Calu3 (cell line): ENCODE measurements at regions of chr5 and their contacts with region 1.

Region 1: GRCh38 chr5:128083033-128083810 is at the start of gene SLC12A2:
- DNase-seq: peak; percentile 92
- H3K4me3 Mint-ChIP-seq: peak within 1 kb of the TSS; percentile 91
- H3K27ac Mint-ChIP-seq: peak within 1 kb of the TSS; percentile 87
- H3K4me1 Mint-ChIP-seq: peaks cover 51% of the 10 kb centered on the region
- H3K27me3 Mint-ChIP-seq: no peaks in the 10 kb centered on the region
- CTCF ChIP-seq: no peak
- total RNA-seq, gene SLC12A2: 393 and 576 TPM in 2 replicates

Region 2: DNA sequence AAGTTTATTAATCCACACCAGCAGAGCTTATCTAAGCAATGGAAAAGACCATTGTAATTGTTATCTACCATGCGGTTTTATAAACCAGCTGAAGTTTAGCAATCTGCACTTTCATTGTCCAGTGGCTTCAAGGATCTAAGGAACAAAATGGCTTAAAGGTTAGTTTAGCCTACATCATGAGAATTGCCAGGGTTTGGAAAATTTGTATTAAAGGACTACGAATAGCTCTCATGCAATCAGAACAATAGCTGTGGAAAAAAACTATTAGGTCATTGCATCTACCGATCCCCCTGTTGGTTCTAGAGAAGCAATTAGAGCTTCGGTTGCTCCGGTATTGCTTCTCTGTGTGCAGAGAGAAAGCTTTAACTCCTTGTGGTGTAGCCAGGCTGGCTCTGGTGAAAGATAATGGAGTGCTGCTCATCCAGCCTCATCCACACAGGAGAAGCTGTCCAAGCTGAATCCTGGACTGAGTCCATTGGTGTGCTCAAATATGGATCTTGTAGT is 86.0 kb before region 1 on chr5:
- CTCF ChIA-PET with region 1: no interaction called
- intact Hi-C with region 1: no loop called
- DNase-seq: no peak
- H3K4me3 Mint-ChIP-seq: peak overlapping the region; percentile 24
- H3K27ac Mint-ChIP-seq: peak overlapping the region; percentile 51
- H3K4me1 Mint-ChIP-seq: peaks cover 53% of the 10 kb centered on the region
- H3K27me3 Mint-ChIP-seq: no peaks in the 10 kb centered on the region
- CTCF ChIP-seq: no peak

Region 3: GRCh38 chr5:128038643-128039042 is 44.6 kb before region 1 on chr5:
- CTCF ChIA-PET with region 1: interaction called, 4 read pairs
- intact Hi-C with region 1: loop called (anchors 5 kb)
- DNase-seq: no peak
- H3K4me3 Mint-ChIP-seq: no peak overlapping the region
- H3K27ac Mint-ChIP-seq: no peak overlapping the region
- H3K4me1 Mint-ChIP-seq: peaks cover 64% of the 10 kb centered on the region
- H3K27me3 Mint-ChIP-seq: no peaks in the 10 kb centered on the region
- CTCF ChIP-seq: no peak